ENCODE measurements at regions of chr19 and their contacts with region 1.

Region 1: GRCh38 chr19:57632987-57633831 is at the start of gene ZNF211:
- DNase-seq: peak; percentile 96
- H3K4me3 ChIP-seq: peak within 1 kb of the TSS; percentile 63 to 93 (median 80)
- H3K27ac ChIP-seq: peak within 1 kb of the TSS; percentile 85 to 89 (median 86)
- H3K4me1 ChIP-seq: peaks cover 0 to 18% (median 10%) of the 10 kb centered on the region in 4 donors
- H3K27me3 ChIP-seq: no peaks in the 10 kb centered on the region
- CTCF ChIP-seq: no peak
- EP300 ChIP-seq: no peak
- POLR2A ChIP-seq: no peak
- total RNA-seq, gene ZNF211: 11.8 to 14.4 (median 12.6) TPM

Region 2: DNA sequence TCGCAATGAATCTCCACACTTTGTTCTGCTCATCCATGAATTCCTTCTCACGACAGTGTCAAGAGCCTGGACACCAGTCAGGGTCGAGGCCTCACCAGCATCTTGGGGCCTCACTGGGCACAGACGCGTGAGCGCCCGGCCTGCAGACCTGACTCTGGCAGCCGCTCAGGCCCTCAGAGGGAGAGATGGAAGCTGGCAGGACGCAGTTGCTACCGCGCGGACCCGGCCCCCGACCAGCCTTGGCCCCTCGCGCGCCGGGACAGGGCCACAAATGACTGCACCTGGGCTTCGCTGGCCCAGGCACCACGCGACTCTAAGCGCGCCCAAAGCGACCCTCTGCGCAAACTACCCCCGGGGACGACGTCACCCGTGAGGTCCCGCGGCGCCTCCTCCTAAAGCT is 514.4 kb before region 1 on chr19:
- intact Hi-C with region 1: no loop called
- DNase-seq: no peak
- H3K4me3 ChIP-seq: no peak overlapping the region
- H3K27ac ChIP-seq: no peak overlapping the region
- H3K4me1 ChIP-seq: no peaks in the 10 kb centered on the region
- H3K27me3 ChIP-seq: peaks cover 0 to 3% (median 0%) of the 10 kb centered on the region in 3 donors
- CTCF ChIP-seq: no peak
- EP300 ChIP-seq: no peak
- POLR2A ChIP-seq: no peak

Region 3: DNA sequence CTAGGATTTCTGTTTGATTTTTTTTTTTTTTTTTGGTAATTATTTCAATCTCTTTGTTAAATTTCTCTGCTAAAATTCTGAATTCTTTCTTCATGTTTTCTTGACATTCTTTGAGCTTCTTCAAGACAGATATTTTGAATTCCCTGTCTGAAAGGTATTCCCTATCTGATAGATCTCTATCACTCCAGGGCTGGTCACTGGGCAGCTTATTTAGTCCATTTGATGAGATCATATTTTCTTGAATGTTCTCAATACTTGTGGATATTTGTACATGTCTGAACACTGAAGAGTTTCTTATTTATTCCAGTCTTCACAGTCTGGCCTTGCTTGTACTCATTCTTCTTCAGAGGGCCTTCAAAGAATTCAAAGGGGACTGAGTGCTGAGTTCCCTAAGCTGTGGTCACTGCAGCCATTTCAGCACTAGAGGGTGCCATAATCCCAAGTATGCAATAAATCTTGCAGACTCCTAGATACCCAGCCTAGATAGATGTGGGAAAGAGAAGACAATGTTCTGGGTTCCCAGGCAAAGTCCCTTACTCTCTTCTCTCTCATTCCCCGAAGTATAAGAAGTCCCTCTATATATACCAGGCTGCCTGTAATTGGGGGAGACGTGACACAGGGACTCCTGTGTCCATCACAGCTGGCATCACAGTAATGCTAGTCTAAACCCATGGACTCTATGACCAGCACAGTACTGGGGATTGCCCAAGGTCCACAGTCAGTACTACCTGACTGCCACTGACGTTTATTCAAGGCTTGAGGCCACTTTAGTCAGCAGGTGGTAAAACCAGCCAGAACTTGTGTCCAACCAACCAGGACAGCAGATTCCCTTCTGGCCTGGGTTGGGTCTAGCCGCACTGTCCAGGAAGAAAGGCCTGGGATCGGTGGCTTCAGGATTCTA is 167.5 kb before region 1 on chr19:
- intact Hi-C with region 1: no loop called
- DNase-seq: no peak
- H3K4me3 ChIP-seq: no peak overlapping the region
- H3K27ac ChIP-seq: no peak overlapping the region
- H3K4me1 ChIP-seq: no peaks in the 10 kb centered on the region
- H3K27me3 ChIP-seq: no peaks in the 10 kb centered on the region
- CTCF ChIP-seq: no peak
- EP300 ChIP-seq: no peak
- POLR2A ChIP-seq: no peak

Region 4: GRCh38 chr19:57583521-57584416 is 49.4 kb before region 1 on chr19 and contains the start of gene ZIK1:
- intact Hi-C with region 1: loop called (anchors 5 kb)
- DNase-seq: peak; percentile 95
- H3K4me3 ChIP-seq: peak within 1 kb of the TSS; percentile 54 to 69 (median 63)
- H3K27ac ChIP-seq: peak within 1 kb of the TSS; percentile 23 to 72 (median 63)
- H3K4me1 ChIP-seq: peaks cover 0 to 26% (median 15%) of the 10 kb centered on the region in 4 donors
- H3K27me3 ChIP-seq: no peaks in the 10 kb centered on the region
- CTCF ChIP-seq: no peak
- EP300 ChIP-seq: no peak
- POLR2A ChIP-seq: no peak
- total RNA-seq, gene ZIK1: 4.8 to 10.5 (median 5.9) TPM

Region 5: DNA sequence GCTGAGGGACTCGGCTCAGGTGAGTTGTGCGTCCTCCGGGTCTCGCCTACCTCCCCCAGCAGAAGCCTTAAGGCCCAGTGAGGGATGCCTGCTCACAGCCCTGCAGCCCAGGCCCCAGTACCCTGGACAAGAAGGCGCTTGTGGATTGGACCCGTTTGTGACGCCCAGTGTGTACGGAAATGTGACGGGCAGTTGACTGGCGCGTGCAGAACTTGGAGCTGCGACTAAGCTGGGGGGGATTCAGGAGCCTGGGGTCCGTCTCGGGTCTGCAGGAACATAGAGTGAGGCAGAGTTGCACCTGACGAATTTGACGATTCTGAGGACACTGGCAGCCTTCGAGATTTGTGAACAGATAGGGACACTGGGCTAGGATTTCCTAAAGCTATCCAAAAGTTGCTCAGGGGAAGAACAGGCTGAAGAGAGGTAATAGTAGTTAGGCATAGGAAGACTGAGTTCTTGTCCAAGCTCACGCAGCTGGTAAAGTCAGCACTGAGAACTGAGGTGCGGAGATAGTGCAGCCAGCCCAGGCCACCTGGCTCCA is 49.1 kb after region 1 on chr19:
- intact Hi-C with region 1: loop called (anchors 2 kb)
- DNase-seq: peak; percentile 61
- H3K4me3 ChIP-seq: peak overlapping the region; percentile 76 to 86 (median 82)
- H3K27ac ChIP-seq: peak overlapping the region; percentile 18 to 72 (median 56)
- H3K4me1 ChIP-seq: peaks cover 0 to 18% (median 12%) of the 10 kb centered on the region in 4 donors
- H3K27me3 ChIP-seq: no peaks in the 10 kb centered on the region
- CTCF ChIP-seq: no peak
- EP300 ChIP-seq: no peak
- POLR2A ChIP-seq: no peak